ENCODE measurements at regions of chr2 and their contacts with region 1.

Region 1: DNA sequence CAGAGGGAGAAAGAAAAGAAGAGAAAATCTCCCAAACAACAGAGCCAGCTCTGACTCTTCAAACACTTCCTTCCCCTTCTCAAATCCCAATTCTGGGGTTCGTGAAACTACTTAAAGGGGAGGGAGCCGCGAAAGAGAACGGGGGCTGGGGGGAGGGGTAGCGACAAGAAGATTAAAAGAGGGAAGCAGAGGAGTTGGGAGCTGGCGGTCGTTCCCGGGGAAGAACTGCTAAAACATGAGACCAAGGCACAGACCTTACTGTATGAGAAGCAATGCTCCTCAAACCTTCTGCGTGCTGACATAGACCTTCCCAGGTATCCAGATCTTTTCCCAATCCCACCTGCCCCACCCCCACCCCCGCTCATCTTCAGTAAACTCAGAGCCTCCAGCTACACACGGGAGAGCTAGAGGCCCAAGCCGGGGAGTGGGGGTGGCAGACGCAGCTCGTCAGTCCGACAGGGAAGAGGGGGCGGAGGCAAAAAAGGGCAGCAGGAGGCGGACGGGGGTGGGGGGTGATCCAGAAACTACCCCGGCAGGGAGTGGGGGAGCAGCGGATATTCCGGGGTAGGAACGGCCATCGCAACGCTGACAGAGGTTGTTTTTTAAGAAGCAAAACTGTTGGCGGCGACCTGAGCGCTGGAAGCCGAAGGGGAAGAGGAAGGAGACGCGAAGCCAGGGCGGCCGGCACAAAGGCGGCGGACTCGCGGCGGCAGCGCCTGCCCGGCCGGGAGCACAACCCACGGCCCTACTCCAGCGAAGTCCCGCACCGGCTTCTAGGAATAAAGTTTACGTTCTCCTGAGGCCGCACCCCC is 1.0 kb downstream of the BAZ2B start:
- DNase-seq: peak; percentile 43
- ATAC-seq: peak; percentile 61
- H3K4me3 Mint-ChIP-seq: peak overlapping the region; percentile 84
- H3K27ac Mint-ChIP-seq: peak overlapping the region; percentile 68
- H3K4me1 Mint-ChIP-seq: peaks cover 16% of the 10 kb centered on the region
- H3K27me3 Mint-ChIP-seq: peaks cover 11% of the 10 kb centered on the region
- CTCF ChIP-seq: no peak

Region 2: GRCh38 chr2:159286709-159287441 is 328.5 kb before region 1 on chr2:
- CTCF ChIA-PET with region 1: no interaction called
- POLR2A ChIA-PET with region 1: no interaction called
- intact Hi-C with region 1: loop called (anchors 10 kb)
- DNase-seq: peak; percentile 97
- ATAC-seq: peak; percentile 99
- H3K4me3 Mint-ChIP-seq: peak overlapping the region; percentile 93
- H3K27ac Mint-ChIP-seq: peak overlapping the region; percentile 84
- H3K4me1 Mint-ChIP-seq: peaks cover 41% of the 10 kb centered on the region
- H3K27me3 Mint-ChIP-seq: peaks cover 2% of the 10 kb centered on the region
- CTCF ChIP-seq: no peak

Region 3: GRCh38 chr2:159399811-159400415 is 215.4 kb before region 1 on chr2:
- CTCF ChIA-PET with region 1: no interaction called
- POLR2A ChIA-PET with region 1: no interaction called
- intact Hi-C with region 1: no loop called
- DNase-seq: no peak
- ATAC-seq: no peak
- H3K4me3 Mint-ChIP-seq: no peak overlapping the region
- H3K27ac Mint-ChIP-seq: no peak overlapping the region
- H3K4me1 Mint-ChIP-seq: no peaks in the 10 kb centered on the region
- H3K27me3 Mint-ChIP-seq: no peaks in the 10 kb centered on the region
- CTCF ChIP-seq: no peak

Region 4: GRCh38 chr2:159516241-159516766 is 99.0 kb before region 1 on chr2:
- CTCF ChIA-PET with region 1: no interaction called
- POLR2A ChIA-PET with region 1: no interaction called
- intact Hi-C with region 1: loop called (anchors 5 kb)
- DNase-seq: no peak
- ATAC-seq: peak; percentile 89
- H3K4me3 Mint-ChIP-seq: peak overlapping the region; percentile 85
- H3K27ac Mint-ChIP-seq: peak overlapping the region; percentile 87
- H3K4me1 Mint-ChIP-seq: peaks cover 31% of the 10 kb centered on the region
- H3K27me3 Mint-ChIP-seq: no peaks in the 10 kb centered on the region
- CTCF ChIP-seq: no peak

Region 5: GRCh38 chr2:159600752-159601151 is 14.6 kb before region 1 on chr2:
- CTCF ChIA-PET with region 1: no interaction called
- POLR2A ChIA-PET with region 1: interaction called, 4 read pairs
- intact Hi-C with region 1: loop called (anchors 2 kb)
- DNase-seq: no peak
- ATAC-seq: no peak
- H3K4me3 Mint-ChIP-seq: no peak overlapping the region
- H3K27ac Mint-ChIP-seq: no peak overlapping the region
- H3K4me1 Mint-ChIP-seq: no peaks in the 10 kb centered on the region
- H3K27me3 Mint-ChIP-seq: no peaks in the 10 kb centered on the region
- CTCF ChIP-seq: no peak

Region 6: GRCh38 chr2:159933727-159934049 is 318.3 kb after region 1 on chr2:
- CTCF ChIA-PET with region 1: no interaction called
- POLR2A ChIA-PET with region 1: no interaction called
- intact Hi-C with region 1: no loop called
- DNase-seq: no peak
- ATAC-seq: peak; percentile 57
- H3K4me3 Mint-ChIP-seq: peak overlapping the region; percentile 60
- H3K27ac Mint-ChIP-seq: peak overlapping the region; percentile 74
- H3K4me1 Mint-ChIP-seq: peaks cover 41% of the 10 kb centered on the region
- H3K27me3 Mint-ChIP-seq: no peaks in the 10 kb centered on the region
- CTCF ChIP-seq: no peak

Measured in activated B cell treated with CpG ODN at 0.5 μM for 24 hours (primary cell).